Naive thymus-derived CD8-positive, alpha-beta T cell (primary cell): ENCODE measurements at regions of chr4 and their contacts with region 1.

Region 1: GRCh38 chr4:147731580-147732517 is at the start of gene ARHGAP10:
- DNase-seq: peak; percentile 44 to 77 (median 56)
- ATAC-seq: peak; percentile 60 to 75
- H3K4me3 Mint-ChIP-seq: peak within 1 kb of the TSS; percentile 88 to 96 (median 93)
- H3K27ac Mint-ChIP-seq: peak within 1 kb of the TSS; percentile 82 to 94 (median 92)
- H3K4me1 Mint-ChIP-seq: peaks cover 14 to 32% (median 27%) of the 10 kb centered on the region in 4 donors
- H3K27me3 Mint-ChIP-seq: peaks cover 0 to 11% (median 4%) of the 10 kb centered on the region in 5 donors
- polyA plus RNA-seq, gene ARHGAP10: 7.4 to 16.4 (median 12.5) TPM

Region 2: GRCh38 chr4:147617173-147617840 is 114.5 kb before region 1 on chr4 and contains the start of gene TMEM184C:
- POLR2A ChIA-PET with region 1: interaction called, 18 read pairs
- DNase-seq: peak; percentile 95 to 99 (median 98)
- ATAC-seq: peak; percentile 93 to 96
- H3K4me3 Mint-ChIP-seq: peak within 1 kb of the TSS; percentile 92 to 99 (median 96)
- H3K27ac Mint-ChIP-seq: peak within 1 kb of the TSS; percentile 95 to 99 (median 98)
- H3K4me1 Mint-ChIP-seq: peaks cover 22 to 52% (median 36%) of the 10 kb centered on the region in 4 donors
- H3K27me3 Mint-ChIP-seq: peaks cover 0 to 10% (median 0%) of the 10 kb centered on the region in 5 donors
- polyA plus RNA-seq, gene TMEM184C: 12.6 to 27.9 (median 16.6) TPM

Region 3: DNA sequence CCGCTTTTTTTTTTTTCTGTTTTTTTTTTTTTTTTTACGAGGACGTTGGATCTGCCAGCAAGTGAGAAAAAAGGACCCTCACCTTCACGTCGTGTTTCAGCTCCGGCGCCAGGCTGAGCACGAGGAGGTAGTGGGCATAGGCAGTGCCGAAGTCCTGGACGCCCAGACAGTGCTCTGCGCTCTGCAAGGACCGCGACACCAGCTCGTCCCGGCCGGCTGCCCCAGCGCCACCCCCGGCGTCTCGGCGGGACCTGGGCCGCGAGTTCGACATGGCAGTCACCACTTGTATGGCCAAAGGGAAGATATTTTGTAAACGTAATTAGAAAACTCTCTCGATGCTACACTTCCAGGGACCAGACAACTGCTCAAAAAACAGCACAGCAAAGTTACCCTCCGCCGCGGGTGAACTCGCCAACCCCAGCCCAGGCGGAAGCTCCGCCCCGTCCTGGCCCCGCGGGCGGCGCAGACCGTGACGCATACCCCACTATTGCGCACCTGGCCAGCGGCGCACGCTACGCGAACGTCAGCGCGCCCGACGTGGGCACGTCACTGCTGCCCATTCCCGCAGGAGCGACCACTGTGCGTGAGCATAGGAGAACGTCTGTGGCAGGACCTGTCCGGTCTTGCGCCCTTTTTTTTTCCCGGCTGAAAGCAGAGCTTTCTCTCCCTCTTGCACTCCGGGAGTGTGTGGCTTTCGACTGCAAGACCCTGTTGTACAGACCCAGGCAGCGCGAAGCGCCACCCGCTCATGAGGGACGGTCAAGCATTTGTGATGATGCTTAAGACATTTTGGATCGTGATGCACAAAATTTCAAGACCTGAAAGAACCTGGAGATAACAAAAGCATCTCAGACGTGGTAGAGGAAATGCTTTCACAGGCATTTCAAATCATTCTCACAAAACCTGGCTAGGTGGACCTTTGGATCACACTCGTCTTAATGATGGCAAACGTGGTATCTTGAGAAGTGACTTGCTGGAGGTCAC is 47.8 kb before region 1 on chr4 and contains the start of gene PRMT9:
- POLR2A ChIA-PET with region 1: interaction called, 12 read pairs
- DNase-seq: peak; percentile 78 to 90 (median 86)
- ATAC-seq: peak; percentile 95 to 96
- H3K4me3 Mint-ChIP-seq: peak within 1 kb of the TSS; percentile 90 to 99 (median 96)
- H3K27ac Mint-ChIP-seq: peak within 1 kb of the TSS; percentile 97 to 100 (median 99)
- H3K4me1 Mint-ChIP-seq: peaks cover 19 to 41% (median 36%) of the 10 kb centered on the region in 4 donors
- H3K27me3 Mint-ChIP-seq: peaks cover 0 to 5% (median under 1%) of the 10 kb centered on the region in 5 donors
- polyA plus RNA-seq, gene PRMT9: 4.6 to 5.8 (median 5.4) TPM